Mammary epithelial cell (primary cell): ENCODE measurements at regions of chr2 and their contacts with region 1.

Region 1: DNA sequence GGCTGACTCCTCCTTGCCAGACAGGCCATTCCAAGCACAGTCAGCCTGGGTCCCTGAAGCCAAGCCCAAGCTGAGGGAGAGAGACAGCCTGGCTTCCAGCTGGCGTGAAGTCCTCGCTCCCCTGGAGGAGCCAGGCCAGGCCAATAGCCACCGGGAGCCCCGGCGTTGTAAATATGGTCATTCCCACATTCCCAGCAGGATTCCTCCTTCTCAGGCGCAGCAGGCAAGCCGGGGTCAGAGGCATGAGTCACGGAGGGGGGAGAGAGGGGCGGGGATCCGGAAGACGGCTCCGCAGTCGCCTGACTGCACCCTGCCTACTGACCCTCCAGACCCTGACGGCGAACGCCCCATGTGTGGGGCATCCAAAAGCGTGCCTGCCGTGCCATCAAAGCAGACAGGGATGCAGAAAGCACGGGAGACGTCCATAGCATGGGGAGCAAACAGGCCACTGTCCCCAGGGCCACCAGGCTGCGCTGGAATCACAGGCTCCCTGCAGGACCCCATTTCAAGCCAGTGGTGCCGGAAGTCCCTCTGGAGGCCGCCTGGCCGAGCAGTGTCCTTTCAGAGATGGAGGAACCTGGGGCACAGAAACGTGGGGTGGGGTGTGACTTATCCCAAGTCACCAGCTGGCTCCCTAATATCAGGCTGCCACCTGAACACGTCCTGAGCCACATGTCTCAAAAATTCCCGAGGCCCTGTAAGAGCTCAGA is 48.2 kb downstream of the TWIST2 start:
- DNase-seq: no peak
- H3K4me3 ChIP-seq: no peak overlapping the region
- H3K27ac ChIP-seq: no peak overlapping the region
- H3K4me1 ChIP-seq: no peaks in the 10 kb centered on the region
- H3K27me3 ChIP-seq: no peaks in the 10 kb centered on the region
- CTCF ChIP-seq: no peak

Region 2: DNA sequence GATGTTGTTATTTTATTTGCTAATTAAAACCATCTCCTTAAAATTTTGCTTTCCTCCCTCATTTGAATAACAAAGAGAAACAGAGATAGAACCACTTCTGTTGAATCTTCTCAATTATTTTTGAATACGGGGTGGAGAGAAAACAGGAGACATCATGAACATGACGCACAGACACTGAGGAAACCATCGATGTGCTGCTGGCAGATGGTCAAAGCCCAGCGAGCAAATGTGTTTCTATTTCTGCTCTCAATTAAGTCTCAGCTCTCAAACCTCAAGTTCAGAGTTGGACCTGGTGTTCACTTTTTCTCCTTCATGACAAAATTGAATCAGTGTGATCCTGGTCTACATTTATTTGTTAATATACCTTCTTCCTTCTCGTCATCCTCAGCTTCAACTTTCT is 84.3 kb before region 1 on chr2:
- CTCF ChIA-PET with region 1: no interaction called
- dilution Hi-C with region 1: loop called (anchors 5 kb)
- in situ Hi-C with region 1: no loop called
- intact Hi-C with region 1: no loop called
- DNase-seq: no peak
- H3K4me3 ChIP-seq: no peak overlapping the region
- H3K27ac ChIP-seq: no peak overlapping the region
- H3K4me1 ChIP-seq: no peaks in the 10 kb centered on the region
- H3K27me3 ChIP-seq: no peaks in the 10 kb centered on the region
- CTCF ChIP-seq: no peak